MCF 10A (cell line): ENCODE measurements at regions of chr22 and their contacts with region 1.

Region 1: GRCh38 chr22:46528121-46528610 is 9.3 kb downstream of the CELSR1 start:
- DNase-seq: peak; percentile 98
- H3K4me3 Mint-ChIP-seq: peak overlapping the region; percentile 39
- H3K27ac Mint-ChIP-seq: peak overlapping the region; percentile 82
- H3K4me1 Mint-ChIP-seq: peaks cover 72% of the 10 kb centered on the region
- H3K27me3 Mint-ChIP-seq: no peaks in the 10 kb centered on the region
- CTCF ChIP-seq: no peak

Region 2: GRCh38 chr22:46457524-46458488 is 70.4 kb before region 1 on chr22:
- CTCF ChIA-PET with region 1: interaction called, 3 read pairs
- POLR2A ChIA-PET with region 1: interaction called, 5 read pairs
- intact Hi-C with region 1: loop called (anchors 2 kb)
- DNase-seq: peak; percentile 56
- H3K4me3 Mint-ChIP-seq: peak overlapping the region; percentile 25
- H3K27ac Mint-ChIP-seq: peak overlapping the region; percentile 53
- H3K4me1 Mint-ChIP-seq: peaks cover 38% of the 10 kb centered on the region
- H3K27me3 Mint-ChIP-seq: no peaks in the 10 kb centered on the region
- CTCF ChIP-seq: no peak

Region 3: DNA sequence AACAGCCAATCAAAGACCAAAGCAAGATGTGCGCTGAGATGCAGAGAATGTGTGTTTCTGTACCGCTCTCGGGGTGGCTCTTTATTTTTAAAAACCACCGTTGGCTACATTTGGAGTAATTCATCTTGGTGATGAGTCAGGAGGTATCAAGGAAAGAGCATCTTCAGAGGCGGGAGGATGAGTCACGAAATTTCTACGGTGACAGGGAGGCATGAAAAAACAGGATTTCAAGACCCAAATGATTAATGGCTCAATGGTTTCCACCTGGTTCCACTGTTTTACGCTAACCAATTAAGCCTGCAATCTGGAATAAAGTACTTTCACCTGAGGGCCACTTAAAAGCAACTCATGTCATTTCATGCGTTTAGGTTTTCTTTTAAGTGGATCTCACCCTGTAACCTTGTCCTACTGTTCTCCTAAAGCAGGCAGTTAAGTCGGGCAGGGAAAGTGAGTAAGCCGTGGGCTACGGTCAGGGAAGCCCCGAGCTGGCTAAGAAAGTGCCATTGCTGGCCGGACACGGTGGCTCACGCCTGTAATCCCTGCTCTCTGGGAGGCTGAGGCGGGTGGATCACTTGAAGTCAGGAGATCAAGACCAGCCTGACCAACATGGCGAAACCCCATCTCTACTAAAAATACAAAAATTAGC is 65.3 kb before region 1 on chr22:
- CTCF ChIA-PET with region 1: interaction called, 3 read pairs
- POLR2A ChIA-PET with region 1: interaction called, 3 read pairs
- intact Hi-C with region 1: loop called (anchors 2 kb)
- DNase-seq: peak; percentile 93
- H3K4me3 Mint-ChIP-seq: peak overlapping the region; percentile 14
- H3K27ac Mint-ChIP-seq: peak overlapping the region; percentile 23
- H3K4me1 Mint-ChIP-seq: peaks cover 14% of the 10 kb centered on the region
- H3K27me3 Mint-ChIP-seq: no peaks in the 10 kb centered on the region
- CTCF ChIP-seq: no peak